Gastrocnemius medialis (tissue), 4 donors: ENCODE measurements at regions of chr15 and their contacts with region 1.

Region 1: DNA sequence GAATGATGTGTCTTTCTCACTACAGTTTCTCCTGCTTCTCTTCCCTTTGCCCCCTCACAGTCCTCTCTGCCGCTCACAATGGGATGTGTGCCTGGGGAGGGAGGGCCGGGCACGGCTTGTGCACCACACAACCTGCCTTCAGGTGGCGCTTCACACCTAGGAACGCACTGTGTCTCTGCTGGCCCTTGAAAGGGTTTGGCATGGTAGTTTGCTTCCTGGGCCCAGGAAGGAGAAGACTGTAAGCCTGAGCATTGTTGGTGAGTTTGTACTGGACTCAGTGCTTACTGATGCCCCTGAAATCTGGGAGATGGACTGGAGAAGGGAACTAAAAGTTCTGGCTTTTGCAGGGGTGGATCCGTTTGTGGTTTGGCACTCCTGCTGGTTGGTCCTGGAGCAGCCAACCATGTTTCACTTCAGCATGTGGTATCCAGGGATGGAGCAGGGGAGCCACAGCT is 9.2 kb downstream of the ALPK3 start:
- DNase-seq: peak; percentile 75 to 82
- ATAC-seq: peak; percentile 32 to 41
- H3K4me3 ChIP-seq: no peak overlapping the region
- H3K27ac ChIP-seq: peak overlapping the region; percentile 94 to 99 (median 96)
- H3K4me1 ChIP-seq: peaks cover 99% of the 10 kb centered on the region in 2 donors
- H3K27me3 ChIP-seq: no peaks in the 10 kb centered on the region
- CTCF ChIP-seq: peak in 4 of 5 experiments; percentile 35 to 42 (median 38)
- POLR2A ChIP-seq: peak; percentile 54 to 56

Region 2: DNA sequence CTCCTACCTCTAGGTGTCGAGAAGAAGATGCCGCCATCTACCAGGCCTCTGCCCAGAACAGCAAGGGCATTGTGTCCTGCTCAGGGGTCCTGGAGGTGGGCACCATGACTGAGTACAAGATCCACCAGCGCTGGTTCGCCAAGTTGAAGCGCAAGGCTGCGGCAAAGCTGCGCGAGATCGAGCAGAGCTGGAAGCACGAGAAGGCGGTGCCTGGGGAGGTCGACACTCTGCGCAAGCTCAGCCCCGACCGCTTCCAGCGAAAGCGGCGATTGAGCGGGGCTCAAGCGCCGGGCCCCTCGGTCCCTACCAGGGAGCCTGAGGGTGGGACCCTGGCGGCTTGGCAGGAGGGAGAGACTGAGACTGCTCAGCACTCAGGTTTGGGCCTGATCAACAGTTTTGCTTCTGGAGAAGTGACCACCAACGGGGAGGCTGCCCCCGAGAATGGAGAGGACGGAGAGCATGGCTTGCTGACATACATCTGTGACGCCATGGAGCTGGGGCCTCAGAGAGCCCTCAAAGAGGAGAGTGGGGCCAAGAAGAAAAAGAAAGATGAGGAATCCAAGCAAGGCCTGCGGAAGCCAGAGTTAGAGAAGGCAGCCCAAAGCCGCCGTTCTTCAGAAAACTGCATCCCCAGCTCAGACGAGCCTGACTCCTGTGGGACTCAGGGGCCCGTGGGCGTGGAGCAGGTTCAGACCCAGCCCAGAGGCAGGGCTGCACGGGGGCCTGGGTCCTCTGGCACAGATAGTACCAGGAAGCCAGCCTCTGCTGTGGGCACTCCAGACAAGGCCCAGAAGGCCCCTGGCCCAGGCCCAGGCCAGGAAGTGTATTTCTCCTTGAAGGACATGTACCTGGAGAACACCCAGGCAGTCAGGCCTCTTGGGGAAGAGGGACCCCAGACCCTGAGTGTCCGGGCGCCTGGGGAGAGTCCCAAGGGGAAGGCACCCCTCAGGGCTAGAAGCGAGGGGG is 13.6 kb after region 1 on chr15:
- in situ Hi-C with region 1: no loop called
- intact Hi-C with region 1: loop called (anchors 1 kb)
- DNase-seq: peak in 1 of 2 donors; percentile 68
- ATAC-seq: peak in 1 of 2 donors; percentile 10
- H3K4me3 ChIP-seq: peak overlapping the region in 2 of 4 donors; percentile 9 to 52
- H3K27ac ChIP-seq: peak overlapping the region; percentile 94 to 99 (median 96)
- H3K4me1 ChIP-seq: peaks cover 81 to 82% of the 10 kb centered on the region in 2 donors
- H3K27me3 ChIP-seq: no peaks in the 10 kb centered on the region
- CTCF ChIP-seq: peak in 2 of 5 experiments; percentile 25 to 38
- POLR2A ChIP-seq: no peak

Region 3: DNA sequence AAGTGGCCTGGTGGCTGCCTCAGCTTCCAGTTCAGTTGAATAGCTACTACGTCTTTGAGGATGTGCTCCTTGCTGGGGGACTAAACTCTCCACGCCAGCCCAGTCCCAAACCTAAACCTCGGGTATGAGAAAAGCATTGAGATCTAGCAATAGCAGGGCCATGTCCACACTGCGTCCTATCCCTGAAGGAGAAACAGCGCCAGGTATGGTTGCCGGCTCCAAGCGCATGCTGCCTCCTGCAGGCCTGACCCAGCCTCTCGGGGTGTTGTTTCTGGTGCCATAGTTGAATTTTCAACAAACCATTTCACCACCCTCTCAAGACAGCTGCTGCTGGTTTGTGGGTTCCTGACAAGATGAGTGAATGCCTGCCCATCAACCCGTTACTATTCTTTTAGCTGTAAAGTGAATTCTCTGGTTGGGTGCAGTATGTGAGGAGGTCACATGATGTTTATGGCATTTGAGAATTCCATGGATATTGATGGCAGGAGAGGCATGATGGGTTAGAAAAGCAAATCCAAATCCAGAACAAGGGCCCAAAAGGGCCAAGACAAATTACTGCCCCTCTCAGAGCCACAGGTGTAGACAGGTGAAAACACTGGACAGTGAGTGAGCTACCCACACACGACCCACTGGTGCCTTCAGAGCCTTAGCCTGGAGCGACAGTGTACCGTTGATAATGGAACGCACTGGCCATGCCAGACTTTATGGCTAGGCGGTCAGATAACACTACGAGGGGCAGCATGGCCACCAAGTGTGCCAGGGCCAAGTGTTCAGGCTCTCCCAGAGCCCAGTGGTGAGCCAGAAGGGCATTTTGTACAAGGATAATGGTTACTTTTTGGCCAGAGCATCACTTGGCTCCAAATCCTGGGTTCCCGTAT is 45.3 kb after region 1 on chr15:
- in situ Hi-C with region 1: loop called in 1 of 4 experiments (anchors 5 kb)
- intact Hi-C with region 1: no loop called
- DNase-seq: peak; percentile 64 to 75
- ATAC-seq: peak; percentile 35 to 58
- H3K4me3 ChIP-seq: no peak overlapping the region
- H3K27ac ChIP-seq: peak overlapping the region; percentile 60 to 79 (median 76)
- H3K4me1 ChIP-seq: peaks cover 23 to 42% of the 10 kb centered on the region in 2 donors
- H3K27me3 ChIP-seq: no peaks in the 10 kb centered on the region
- CTCF ChIP-seq: peak in 3 of 5 experiments; percentile 12 to 32 (median 27)
- POLR2A ChIP-seq: peak in 1 of 2 donors; percentile 19